ENCODE measurements at regions of chr21 and their contacts with region 1.

Region 1: DNA sequence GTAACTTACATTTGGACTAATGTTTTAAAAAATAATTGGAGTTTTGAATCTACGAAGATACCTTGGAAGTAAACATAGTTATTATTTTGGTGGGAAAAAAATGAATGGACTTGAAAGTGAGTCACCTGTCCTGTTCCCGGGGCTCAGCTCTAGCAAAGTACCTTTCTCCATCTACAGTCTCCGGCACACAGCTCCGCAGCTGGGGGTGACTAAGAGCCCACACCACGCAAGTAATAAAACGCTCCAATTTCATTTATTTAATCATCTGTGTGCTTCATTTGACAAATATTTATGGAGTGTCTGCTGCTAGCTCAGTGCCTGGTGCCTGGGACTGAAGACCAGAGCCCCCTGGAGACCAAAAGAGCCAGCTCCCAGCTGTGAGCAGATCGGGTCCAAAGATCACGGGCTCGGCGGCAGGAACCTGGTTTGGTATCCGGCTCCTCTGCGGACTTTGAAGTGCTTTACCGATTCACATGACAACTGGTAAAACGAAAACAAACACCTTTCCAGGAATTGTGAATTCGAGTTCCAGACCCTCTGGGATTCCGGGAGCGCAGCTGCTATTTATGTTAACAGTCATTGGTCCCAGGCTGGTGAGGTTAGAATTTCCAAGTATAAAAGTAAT is 1.7 kb upstream of the RIPK4 start:
- DNase-seq: no peak
- H3K4me3 ChIP-seq: peak overlapping the region; percentile 37
- CTCF ChIP-seq: peak; percentile 59

Region 2: GRCh38 chr21:41671859-41672532 is 96.6 kb before region 1 on chr21:
- in situ Hi-C with region 1: loop called (anchors 5 kb)
- DNase-seq: no peak
- H3K4me3 ChIP-seq: no peak overlapping the region
- CTCF ChIP-seq: no peak

Region 3: DNA sequence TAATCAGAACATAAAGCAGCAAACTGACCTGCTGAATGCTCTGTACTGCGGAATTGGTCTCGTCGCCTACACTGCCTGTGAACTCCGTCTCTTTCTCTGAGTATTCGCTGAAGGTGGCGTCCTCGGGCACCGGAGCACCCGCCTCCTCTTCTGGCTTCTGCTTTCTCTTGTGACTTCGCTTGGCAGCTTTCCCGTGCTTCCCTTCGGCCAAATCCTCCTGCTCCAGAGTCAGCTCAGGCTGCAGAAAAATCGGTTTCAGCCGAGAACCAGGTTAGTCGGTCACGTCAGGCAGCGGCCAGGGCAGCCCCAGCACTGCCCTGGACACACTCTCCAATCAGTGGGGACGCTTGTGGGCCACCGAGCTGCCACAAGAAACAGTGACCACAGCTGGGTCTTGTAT is 34.1 kb after region 1 on chr21:
- in situ Hi-C with region 1: no loop called
- DNase-seq: no peak
- H3K4me3 ChIP-seq: no peak overlapping the region
- CTCF ChIP-seq: no peak

Measured in astrocyte of the cerebellum (primary cell).